GM10248 (cell line): ENCODE measurements at regions of chr17 and their contacts with region 1.

Region 1: GRCh38 chr17:47286198-47286914 is 32.7 kb downstream of the ITGB3 start:
- DNase-seq: peak; percentile 71
- CTCF ChIP-seq: no peak

Region 2: GRCh38 chr17:47257651-47258339 is 28.6 kb before region 1 on chr17:
- CTCF ChIA-PET with region 1: interaction called, 13 read pairs
- POLR2A ChIA-PET with region 1: interaction called, 3 read pairs
- DNase-seq: no peak
- CTCF ChIP-seq: no peak

Region 3: GRCh38 chr17:47305302-47305923 is 19.1 kb after region 1 on chr17:
- CTCF ChIA-PET with region 1: interaction called, 24 read pairs
- POLR2A ChIA-PET with region 1: no interaction called
- DNase-seq: no peak
- CTCF ChIP-seq: no peak

Region 4: DNA sequence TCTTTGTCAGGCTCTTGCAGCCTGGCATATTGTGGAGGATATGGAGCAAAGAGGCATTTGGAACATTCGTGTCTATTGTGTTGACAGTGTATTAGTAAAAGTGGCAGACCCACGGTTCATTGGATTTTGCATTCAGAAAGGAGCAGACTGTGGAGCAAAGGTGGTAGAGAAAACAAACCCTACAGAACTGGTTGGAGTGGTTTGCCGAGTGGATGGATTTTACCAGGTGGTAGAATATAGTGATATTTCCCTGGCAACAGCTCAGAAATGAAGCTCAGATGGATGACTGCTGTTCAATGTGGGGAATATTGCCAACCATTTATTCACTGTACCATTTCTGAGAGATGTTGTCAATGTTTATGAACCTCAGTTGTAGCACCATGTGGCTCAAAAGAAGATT is 81.9 kb after region 1 on chr17:
- CTCF ChIA-PET with region 1: no interaction called
- POLR2A ChIA-PET with region 1: no interaction called
- DNase-seq: no peak
- CTCF ChIP-seq: no peak